Activated naive CD4-positive, alpha-beta T cell treated with anti-CD3 and anti-CD28 coated beads for 36 hours (primary cell): ENCODE measurements at regions of chr6 and their contacts with region 1.

Region 1: DNA sequence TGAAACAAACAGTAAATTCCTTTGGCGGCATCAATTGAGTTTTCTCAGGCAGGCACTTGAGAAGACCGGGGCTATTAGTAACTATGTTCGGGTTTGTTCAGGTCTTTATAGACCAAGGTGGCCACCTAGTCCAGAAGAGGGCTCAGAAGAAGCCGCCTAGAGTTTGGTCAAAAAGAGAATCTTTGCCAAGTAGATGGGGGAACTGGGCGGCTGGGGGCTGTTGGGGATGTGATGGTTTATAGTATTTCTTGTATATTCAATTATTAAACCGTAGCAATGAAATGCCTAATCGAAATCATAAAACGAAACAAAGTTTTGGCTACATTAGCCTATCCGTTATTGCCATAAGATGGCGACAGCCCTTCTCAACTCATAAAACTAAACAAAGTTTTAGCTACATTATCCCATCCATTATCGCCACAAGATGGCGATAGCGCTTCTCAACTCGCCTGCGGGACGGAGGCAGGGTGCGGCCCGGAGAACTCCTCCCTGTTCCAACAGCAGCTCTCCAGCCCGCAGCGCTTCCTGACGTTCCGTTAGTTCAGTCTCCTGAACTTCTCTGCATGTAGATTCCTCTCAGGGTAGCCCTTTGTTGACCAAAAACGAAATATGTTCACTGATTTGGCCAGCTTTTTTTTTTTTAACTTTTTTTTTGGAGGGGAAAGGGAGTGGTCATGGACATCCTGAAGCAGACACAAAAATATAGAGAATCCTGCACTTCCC is 120.5 kb upstream of the PRSS16 start:
- DNase-seq: peak; percentile 92
- H3K4me3 Mint-ChIP-seq: peak overlapping the region; percentile 56
- H3K27ac Mint-ChIP-seq: peak overlapping the region; percentile 69
- H3K4me1 Mint-ChIP-seq: peaks cover 13% of the 10 kb centered on the region
- H3K27me3 Mint-ChIP-seq: no peaks in the 10 kb centered on the region

Region 2: DNA sequence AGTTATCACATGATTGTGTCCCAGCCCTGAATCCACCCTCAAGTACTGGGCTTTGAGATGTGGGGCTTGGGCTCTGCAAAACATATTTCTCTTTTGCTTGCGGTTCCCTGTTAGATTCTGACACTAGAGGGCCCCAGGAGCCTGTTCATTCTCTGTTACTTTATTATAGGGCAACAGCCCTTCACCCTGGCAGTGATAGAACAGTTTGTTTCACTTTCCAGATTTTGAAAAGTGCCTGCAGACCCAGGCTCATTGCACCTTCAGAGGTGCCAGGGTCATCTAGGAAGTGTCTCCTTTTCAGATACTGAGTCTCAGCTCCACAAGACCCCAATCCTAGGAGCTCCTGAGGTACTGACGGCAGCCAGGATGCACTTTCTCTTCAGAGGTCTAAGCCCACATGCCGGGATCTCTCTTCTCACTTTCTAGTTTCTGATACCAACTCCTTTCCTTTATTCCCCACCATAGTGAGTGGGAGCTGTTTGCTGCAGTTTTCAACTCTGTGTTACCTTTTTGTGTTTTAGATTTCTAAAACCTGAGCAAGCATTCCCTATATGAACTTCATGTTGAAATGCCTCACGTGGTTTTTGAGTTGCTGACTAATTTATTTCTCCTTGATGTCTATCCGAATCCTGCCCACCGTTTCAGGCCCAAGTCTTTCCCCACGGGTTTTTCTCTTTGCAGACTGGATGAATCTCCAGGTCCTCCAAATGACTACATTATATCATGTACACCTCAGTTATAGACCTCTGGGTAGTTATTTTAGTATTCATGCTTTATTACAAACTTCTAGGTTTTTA is 519.3 kb before region 1 on chr6:
- CTCF ChIA-PET with region 1: interaction called, 3 read pairs
- intact Hi-C with region 1: loop called (anchors 2 kb)
- DNase-seq: peak; percentile 79
- H3K4me3 Mint-ChIP-seq: peak overlapping the region; percentile 52
- H3K27ac Mint-ChIP-seq: no peak overlapping the region
- H3K4me1 Mint-ChIP-seq: peaks cover 15% of the 10 kb centered on the region
- H3K27me3 Mint-ChIP-seq: peaks cover 1% of the 10 kb centered on the region

Region 3: GRCh38 chr6:27146706-27147505 is 19.9 kb after region 1 on chr6:
- CTCF ChIA-PET with region 1: interaction called, 13 read pairs
- intact Hi-C with region 1: loop called (anchors 1 kb)
- DNase-seq: peak; percentile 87
- H3K4me3 Mint-ChIP-seq: no peak overlapping the region
- H3K27ac Mint-ChIP-seq: no peak overlapping the region
- H3K4me1 Mint-ChIP-seq: peaks cover 11% of the 10 kb centered on the region
- H3K27me3 Mint-ChIP-seq: no peaks in the 10 kb centered on the region

Region 4: DNA sequence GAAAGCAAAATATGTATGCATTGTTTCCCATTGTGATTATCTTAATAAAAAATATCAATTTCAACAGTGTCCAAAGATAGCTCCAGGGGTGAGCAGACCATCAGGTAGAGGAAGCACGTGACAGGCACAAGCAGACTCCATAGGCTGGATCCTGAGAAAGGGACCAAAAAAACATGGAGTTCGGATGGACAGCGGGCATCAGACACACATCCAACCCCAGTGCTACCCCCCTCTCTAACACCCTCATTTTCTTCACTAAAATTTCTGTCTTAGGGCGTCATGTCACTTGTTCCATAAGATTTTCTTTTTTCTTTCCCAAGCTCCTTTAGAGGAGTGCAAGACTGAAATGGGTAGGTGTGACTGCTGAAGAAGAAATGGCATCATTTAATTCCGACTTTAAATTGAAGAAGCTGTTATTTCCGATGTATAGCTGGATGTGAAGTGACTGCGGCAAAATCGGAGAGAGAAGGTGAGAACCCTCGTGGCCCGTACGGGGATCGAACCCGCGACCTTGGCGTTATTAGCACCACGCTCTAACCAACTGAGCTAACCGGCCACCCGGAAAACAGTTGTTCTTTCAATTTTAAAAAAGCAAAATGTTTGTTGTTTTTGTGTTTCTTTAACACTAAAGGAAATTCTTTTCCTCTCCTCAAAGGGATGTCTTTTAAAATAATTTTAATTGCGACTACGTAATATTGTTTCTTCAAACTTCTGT is 110.3 kb after region 1 on chr6:
- CTCF ChIA-PET with region 1: no interaction called
- intact Hi-C with region 1: loop called (anchors 5 kb)
- DNase-seq: peak; percentile 75
- H3K4me3 Mint-ChIP-seq: peak overlapping the region; percentile 53
- H3K27ac Mint-ChIP-seq: peak overlapping the region; percentile 5
- H3K4me1 Mint-ChIP-seq: peaks cover 20% of the 10 kb centered on the region
- H3K27me3 Mint-ChIP-seq: peaks cover 68% of the 10 kb centered on the region

Region 5: GRCh38 chr6:27312146-27312949 is 185.4 kb after region 1 on chr6 and contains the start of gene POM121L2:
- CTCF ChIA-PET with region 1: no interaction called
- intact Hi-C with region 1: loop called (anchors 1 kb)
- DNase-seq: peak; percentile 79
- H3K4me3 Mint-ChIP-seq: peak within 1 kb of the TSS; percentile 72
- H3K27ac Mint-ChIP-seq: no peak within 1 kb of the TSS
- H3K4me1 Mint-ChIP-seq: peaks cover 10% of the 10 kb centered on the region
- H3K27me3 Mint-ChIP-seq: peaks cover 62% of the 10 kb centered on the region
- total RNA-seq, gene POM121L2: not detected